ENCODE measurements at regions of chr5 and their contacts with region 1.

Region 1: DNA sequence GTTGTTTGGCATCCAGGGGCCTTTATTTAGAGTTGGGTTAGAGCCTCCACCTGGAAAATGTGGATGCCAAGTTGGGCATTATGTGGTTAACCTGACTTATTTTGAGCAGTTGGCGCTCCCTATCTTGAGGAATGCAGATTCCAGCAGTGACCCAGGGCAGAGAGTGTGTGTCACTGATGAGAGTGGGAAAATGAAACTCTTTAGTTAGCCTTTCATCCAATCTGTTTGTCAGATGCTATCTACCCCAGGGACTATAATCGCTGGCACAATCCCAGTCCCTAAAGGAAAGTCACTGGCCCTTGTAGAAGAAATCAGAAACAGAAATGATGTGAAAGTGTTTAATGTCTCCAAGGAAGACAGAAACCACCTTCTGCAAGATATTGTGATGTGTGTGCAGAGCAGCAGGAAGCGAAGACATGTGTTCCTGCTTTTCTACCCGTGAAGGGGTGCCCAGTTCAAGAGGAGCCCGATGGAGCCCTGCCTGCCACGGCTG is 10.2 kb upstream of the STING1 start:
- DNase-seq: no peak
- H3K4me3 Mint-ChIP-seq: no peak overlapping the region
- H3K27ac Mint-ChIP-seq: peak overlapping the region; percentile 79
- H3K4me1 Mint-ChIP-seq: peaks cover 28% of the 10 kb centered on the region
- H3K27me3 Mint-ChIP-seq: no peaks in the 10 kb centered on the region

Region 2: DNA sequence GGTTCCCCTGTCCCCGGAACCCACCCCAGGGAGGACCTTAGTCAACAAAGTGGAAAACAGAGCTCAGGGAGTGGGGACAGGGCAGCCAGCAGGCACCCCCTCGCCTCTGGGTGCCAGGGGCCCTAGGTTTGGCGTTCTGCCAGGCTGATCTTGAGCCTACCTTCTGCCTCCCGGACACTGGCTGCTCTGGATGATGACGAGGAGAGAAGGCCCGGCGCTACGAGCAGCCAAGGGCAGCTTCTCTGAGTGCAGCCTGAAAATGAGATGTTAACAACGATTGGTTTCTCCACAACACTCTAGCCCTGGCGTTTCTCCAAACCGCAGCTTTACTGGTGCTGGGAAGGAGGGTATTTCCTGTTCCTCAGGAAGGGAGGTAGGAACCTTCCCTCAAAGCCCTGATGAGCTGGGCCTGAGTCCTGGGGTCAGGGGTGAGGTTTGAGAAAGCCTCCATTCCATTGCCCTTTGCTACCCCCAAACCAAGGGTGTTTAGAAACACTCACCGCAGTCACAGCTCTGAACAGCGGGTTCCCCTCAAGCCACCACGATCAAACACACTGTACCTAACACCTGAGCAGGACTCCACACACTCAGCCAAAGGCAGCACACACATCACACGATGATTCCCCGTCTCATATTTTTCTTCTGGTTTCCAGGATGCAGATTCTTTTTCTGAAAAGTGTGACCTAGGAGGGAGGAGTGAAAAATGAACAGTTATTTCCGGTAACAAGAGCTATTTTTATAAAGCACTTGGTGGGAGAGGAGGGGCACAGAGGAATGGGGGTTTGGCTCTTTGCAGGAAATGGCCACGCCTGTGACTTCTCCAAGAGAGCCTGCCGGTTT is 10.5 kb before region 1 on chr5 and contains the start of gene STING1:
- CTCF ChIA-PET with region 1: interaction called, 17 read pairs
- POLR2A ChIA-PET with region 1: interaction called, 4 read pairs
- DNase-seq: peak; percentile 73
- H3K4me3 Mint-ChIP-seq: peak within 1 kb of the TSS; percentile 82
- H3K27ac Mint-ChIP-seq: peak within 1 kb of the TSS; percentile 95
- H3K4me1 Mint-ChIP-seq: peaks cover 43% of the 10 kb centered on the region
- H3K27me3 Mint-ChIP-seq: no peaks in the 10 kb centered on the region
- total RNA-seq, gene STING1: 175 TPM

Measured in activated CD4-positive, alpha-beta T cell treated with anti-CD3 and anti-CD28 coated beads, Interleukin-2, amount 10 ng/mL, durations not matched to agents 7 days and 5 days (primary cell).